ENCODE measurements at regions of chr10 and their contacts with region 1.

Region 1: DNA sequence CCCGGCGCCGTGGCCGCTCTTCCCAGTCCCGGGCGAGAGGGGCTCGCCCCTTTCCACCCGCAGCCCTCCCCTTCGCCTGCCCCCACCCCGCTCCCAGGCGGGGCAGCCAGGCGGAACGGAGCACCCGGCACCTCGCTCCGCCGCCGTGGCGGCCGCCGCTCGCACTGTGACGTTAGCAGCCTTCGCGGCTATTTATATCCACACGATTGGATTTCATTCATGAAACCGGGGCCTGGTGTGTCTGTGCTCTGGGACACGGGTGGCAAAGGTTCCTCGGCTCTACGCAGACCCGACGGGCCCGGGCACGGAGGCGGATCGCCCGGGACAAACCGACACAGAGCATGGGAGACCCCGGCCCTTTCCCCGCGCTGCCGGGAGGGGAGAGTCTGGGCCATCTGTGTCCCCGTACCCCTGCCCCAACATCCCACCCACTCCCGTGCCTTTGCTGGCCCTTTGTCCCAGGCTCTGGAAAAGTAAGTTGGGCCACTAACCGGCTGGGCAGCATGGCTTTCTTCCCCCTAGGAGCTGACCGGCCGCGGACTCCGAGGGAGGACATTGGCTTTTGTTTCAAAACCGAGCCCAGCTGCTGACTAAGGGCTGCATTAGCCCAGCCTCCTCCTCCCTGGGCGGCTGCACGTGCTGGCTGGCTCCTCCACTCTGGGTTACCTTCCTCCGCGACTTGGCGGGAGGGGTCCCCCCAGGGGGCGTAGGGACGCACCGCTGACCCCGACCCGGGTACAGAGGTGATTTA is at the start of gene RHOBTB1:
- DNase-seq: peak; percentile 45
- ATAC-seq: peak; percentile 75
- H3K4me3 Mint-ChIP-seq: peak within 1 kb of the TSS; percentile 72
- H3K27ac Mint-ChIP-seq: no peak within 1 kb of the TSS
- H3K4me1 Mint-ChIP-seq: peaks cover 1% of the 10 kb centered on the region
- H3K27me3 Mint-ChIP-seq: peaks cover 71% of the 10 kb centered on the region
- total RNA-seq, gene RHOBTB1: not detected

Region 2: DNA sequence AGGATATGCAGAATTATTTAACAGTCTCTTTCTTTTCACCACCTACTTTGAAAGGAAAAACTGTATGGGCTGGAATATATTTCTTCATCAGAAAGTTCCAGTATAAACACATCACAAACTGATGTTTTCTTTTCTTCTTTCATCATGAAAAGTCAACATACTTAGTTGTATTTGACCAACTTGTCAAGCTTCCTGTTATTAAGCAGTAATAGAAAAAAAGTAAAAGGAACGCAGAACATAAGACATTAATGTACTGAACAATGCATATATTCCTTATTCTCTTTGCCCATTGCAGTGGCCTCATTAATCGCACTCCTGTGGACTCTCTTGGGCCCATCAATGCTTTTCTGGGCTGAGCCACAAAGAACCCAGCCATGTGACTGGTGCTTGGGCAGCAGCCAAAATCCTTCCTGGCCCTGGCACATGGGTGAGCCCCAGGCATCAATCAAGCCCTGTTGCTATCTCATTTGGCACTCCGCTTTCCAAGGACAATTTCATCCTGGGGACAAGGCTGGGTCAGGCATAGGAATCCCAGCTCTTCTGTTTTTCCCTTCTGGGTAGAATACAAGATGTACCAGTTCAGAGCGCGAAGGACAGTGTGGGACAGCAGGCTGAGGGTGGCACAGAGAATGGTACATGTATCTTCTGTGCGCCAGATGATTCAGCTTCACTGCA is 42.6 kb before region 1 on chr10:
- POLR2A ChIA-PET with region 1: no interaction called
- DNase-seq: no peak
- ATAC-seq: no peak
- H3K4me3 Mint-ChIP-seq: no peak overlapping the region
- H3K27ac Mint-ChIP-seq: no peak overlapping the region
- H3K4me1 Mint-ChIP-seq: no peaks in the 10 kb centered on the region
- H3K27me3 Mint-ChIP-seq: peaks cover 2% of the 10 kb centered on the region

Region 3: GRCh38 chr10:61621605-61622060 is 677.3 kb after region 1 on chr10:
- POLR2A ChIA-PET with region 1: interaction called, 12 read pairs
- DNase-seq: no peak
- ATAC-seq: no peak
- H3K4me3 Mint-ChIP-seq: no peak overlapping the region
- H3K27ac Mint-ChIP-seq: no peak overlapping the region
- H3K4me1 Mint-ChIP-seq: no peaks in the 10 kb centered on the region
- H3K27me3 Mint-ChIP-seq: peaks cover 5% of the 10 kb centered on the region

Measured in activated naive CD8-positive, alpha-beta T cell treated with anti-CD3 and anti-CD28 coated beads, Interleukin-2, amount 10 ng/mL, durations not matched to agents 7 days and 5 days (primary cell).